Astrocyte of the cerebellum (primary cell): ENCODE measurements at regions of chr12 and their contacts with region 1.

Region 1: DNA sequence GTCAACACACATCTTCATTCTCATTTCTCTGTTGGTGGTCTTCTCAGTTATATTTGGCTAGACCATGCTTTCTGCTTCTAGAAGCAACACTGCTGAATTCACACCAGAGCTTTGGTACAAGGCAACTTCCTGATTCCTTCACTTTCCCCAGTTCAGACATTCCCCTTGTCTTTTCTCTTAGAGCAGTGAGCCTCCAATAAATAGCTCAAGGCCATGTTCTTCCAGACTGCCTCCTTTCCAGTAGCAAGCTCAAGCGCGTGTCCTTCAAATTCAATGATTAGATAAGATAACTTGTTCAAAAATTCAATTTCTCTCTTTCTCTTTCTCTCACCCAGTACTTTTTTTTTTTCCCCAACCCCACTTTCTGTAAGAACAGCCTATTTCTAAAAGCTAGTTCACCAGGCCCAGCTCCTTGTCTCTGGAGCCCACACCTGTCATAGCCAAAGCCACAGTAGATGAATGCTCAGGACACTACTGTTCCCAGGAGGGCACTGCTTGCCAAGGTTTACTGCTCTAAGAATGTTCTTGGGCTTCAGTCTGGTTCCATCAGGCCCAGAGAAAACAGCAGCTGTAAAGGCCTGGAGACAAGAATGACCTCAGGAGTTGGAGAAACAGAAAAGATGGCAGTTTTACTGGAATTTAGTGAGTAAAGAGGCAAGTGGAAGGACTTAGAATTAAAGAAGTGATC is 17.7 kb downstream of the TBK1 start:
- DNase-seq: no peak
- H3K4me3 ChIP-seq: no peak overlapping the region
- CTCF ChIP-seq: no peak

Region 2: GRCh38 chr12:64419696-64420095 is 49.9 kb before region 1 on chr12:
- in situ Hi-C with region 1: no loop called
- DNase-seq: no peak
- H3K4me3 ChIP-seq: no peak overlapping the region
- CTCF ChIP-seq: no peak

Region 3: GRCh38 chr12:64431791-64432190 is 37.8 kb before region 1 on chr12:
- in situ Hi-C with region 1: loop called (anchors 5 kb)
- DNase-seq: no peak
- H3K4me3 ChIP-seq: no peak overlapping the region
- CTCF ChIP-seq: no peak